A549 (cell line): ENCODE measurements at regions of chr10 and their contacts with region 1.

Region 1: DNA sequence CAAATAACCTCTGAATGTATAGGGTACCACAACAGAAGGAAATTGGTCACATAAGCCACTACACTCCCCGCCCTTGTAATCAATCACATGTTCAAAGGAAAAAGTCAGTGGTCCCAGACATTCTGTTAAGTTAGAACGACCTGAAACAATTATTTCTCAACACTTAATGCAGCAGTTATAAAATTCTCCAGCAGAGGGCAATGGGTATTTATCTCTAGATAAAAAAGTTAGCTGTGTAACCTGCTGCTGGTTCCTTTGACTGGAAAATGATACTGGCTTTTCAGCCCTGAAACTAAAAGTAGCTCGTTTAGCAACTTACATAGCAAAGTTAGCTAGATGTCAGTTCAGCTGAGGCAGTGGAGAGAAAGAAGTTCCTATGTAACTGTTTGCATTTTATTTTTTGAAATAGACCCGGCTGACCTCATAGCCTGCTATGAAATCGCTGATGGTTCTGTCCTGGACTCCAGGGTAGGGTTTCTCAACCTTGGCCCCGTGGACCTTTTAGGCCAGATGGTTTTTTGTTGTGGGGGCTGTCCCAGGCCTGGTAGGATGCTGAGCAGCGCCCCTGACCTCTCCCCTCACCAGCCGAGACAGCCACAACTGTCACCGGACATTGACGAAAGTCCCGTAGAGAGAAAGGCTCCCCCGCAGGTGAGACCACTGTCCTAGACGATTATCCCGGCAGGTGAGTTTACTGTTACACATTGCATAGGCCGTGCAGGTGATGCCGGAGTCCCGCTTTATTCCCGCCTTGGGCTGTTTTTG is 40.2 kb upstream of the PROSER2 start:
- DNase-seq: peak; percentile 63 to 72
- ATAC-seq: peak; percentile 70 to 85; a peak in 5 of 6 replicates
- H3K4me3 ChIP-seq: no peak overlapping the region
- H3K27ac ChIP-seq: no peak overlapping the region
- H3K4me1 ChIP-seq: no peaks in the 10 kb centered on the region
- CTCF ChIP-seq: peak; percentile 85
- EP300 ChIP-seq: no peak
- POLR2A ChIP-seq: no peak
- RAD21 ChIP-seq: peak; percentile 77 to 79

Region 2: DNA sequence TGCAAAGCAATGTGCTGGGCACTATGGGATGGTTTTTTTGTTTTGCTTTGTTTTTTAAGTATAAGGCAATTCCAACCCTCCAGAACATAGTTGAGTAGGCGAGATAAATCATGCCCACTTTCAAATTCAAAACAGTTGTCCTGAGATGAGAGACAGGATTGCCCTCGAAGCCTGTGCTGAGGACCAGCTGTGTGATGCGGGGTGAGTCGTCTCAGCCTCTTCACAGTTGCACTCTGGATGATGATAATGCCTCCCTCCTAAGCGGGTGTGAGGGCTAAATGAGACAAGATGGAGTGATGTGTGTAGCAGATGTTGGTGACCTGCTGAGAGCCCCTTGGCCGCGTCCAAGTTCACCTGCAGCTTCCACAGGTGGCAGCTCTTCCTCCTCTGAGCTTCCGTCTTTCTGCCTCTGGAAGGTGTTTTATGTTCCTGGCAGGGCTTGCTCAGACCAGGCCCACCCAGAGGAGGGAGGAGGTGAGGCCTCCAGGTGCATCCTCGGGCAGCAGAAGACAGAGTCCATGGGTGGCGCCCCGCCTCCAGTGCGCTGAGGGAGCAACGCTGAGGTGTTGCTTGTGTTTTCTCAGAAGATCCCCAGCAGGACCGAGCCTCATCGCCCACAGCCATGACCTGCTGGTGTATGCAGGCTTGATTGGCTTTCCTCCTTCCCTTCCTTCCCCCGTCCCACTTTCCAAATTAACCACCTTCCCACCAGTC is 10.2 kb before region 1 on chr10:
- CTCF ChIA-PET with region 1: interaction called, 29 read pairs
- POLR2A ChIA-PET with region 1: no interaction called
- DNase-seq: no peak
- ATAC-seq: no peak
- H3K4me3 ChIP-seq: no peak overlapping the region
- H3K27ac ChIP-seq: no peak overlapping the region
- H3K4me1 ChIP-seq: peaks cover 8% of the 10 kb centered on the region; the same call in 1 of the 3 replicates
- CTCF ChIP-seq: no peak
- EP300 ChIP-seq: no peak
- POLR2A ChIP-seq: no peak
- RAD21 ChIP-seq: no peak

Region 3: DNA sequence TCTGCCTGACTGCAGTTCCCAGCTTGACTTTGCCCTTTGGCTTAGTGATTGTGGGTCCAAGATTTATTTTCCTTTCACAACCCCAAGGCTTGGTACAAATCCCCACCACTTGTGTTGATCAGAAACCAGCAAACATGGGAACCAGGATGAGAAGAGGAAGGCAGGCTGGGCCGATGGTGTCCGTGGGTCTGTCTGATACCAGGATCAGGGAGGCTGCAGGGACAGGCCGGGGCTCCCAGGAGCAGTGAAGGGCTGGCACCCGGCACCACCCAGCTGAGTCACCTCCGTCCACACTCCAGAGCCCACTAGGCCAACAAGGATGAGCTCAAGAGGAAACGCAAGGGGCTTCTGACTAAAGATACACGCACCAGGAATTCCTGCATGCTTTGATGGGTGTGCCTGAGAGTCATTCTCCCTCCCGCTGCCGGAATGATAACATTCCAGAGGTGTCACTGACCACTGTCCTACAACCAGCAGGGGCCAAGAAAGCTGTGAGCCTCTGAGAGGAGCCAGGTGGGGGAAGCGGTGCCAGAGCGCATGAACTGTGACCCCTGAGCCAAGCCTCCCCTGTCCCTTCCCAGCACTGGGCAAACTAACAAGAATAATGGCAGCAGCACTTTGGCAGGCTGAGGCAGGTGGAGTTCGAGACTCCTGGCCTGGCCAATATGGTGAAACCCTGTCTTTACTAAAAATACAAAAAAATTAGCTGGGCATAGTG is 10.9 kb after region 1 on chr10:
- CTCF ChIA-PET with region 1: interaction called, 79 read pairs
- POLR2A ChIA-PET with region 1: no interaction called
- DNase-seq: peak; percentile 94 to 95
- ATAC-seq: peak; percentile 96
- H3K4me3 ChIP-seq: 0 out of 3 replicates have a peak overlapping the region, but pooled peaks have one; percentile 9
- H3K27ac ChIP-seq: peak overlapping the region; percentile 80 to 86
- H3K4me1 ChIP-seq: peaks cover 30% of the 10 kb centered on the region
- CTCF ChIP-seq: no peak
- EP300 ChIP-seq: peak in 1 of 2 experiments; percentile 53; a peak in 1 of 5 replicates
- POLR2A ChIP-seq: no peak
- RAD21 ChIP-seq: no peak

Region 4: GRCh38 chr10:11798845-11799735 is 16.1 kb after region 1 on chr10:
- CTCF ChIA-PET with region 1: interaction called, 79 read pairs
- POLR2A ChIA-PET with region 1: no interaction called
- DNase-seq: no peak
- ATAC-seq: no peak
- H3K4me3 ChIP-seq: no peak overlapping the region
- H3K27ac ChIP-seq: no peak overlapping the region
- H3K4me1 ChIP-seq: peaks cover 22% of the 10 kb centered on the region
- CTCF ChIP-seq: no peak
- EP300 ChIP-seq: no peak
- POLR2A ChIP-seq: no peak
- RAD21 ChIP-seq: no peak

Region 5: GRCh38 chr10:11810313-11810766 is 27.4 kb after region 1 on chr10:
- CTCF ChIA-PET with region 1: interaction called, 14 read pairs
- POLR2A ChIA-PET with region 1: no interaction called
- DNase-seq: peak in 1 of 2 experiments; percentile 56
- ATAC-seq: peak; percentile 35 to 77; a peak in 3 of 6 replicates
- H3K4me3 ChIP-seq: no peak overlapping the region
- H3K27ac ChIP-seq: peak overlapping the region in 1 of 2 experiments; percentile 44; a peak in 1 of 6 replicates
- H3K4me1 ChIP-seq: peaks cover 12% of the 10 kb centered on the region
- CTCF ChIP-seq: no peak
- EP300 ChIP-seq: no peak
- POLR2A ChIP-seq: no peak
- RAD21 ChIP-seq: no peak

Region 6: GRCh38 chr10:11823122-11823988 is 40.4 kb after region 1 on chr10 and contains the start of gene PROSER2:
- CTCF ChIA-PET with region 1: interaction called, 77 read pairs
- POLR2A ChIA-PET with region 1: no interaction called
- DNase-seq: peak; percentile 67 to 77
- ATAC-seq: peak; percentile 85
- H3K4me3 ChIP-seq: peak within 1 kb of the TSS; percentile 99
- H3K27ac ChIP-seq: peak within 1 kb of the TSS; percentile 92 to 93
- H3K4me1 ChIP-seq: peaks cover 34% of the 10 kb centered on the region
- CTCF ChIP-seq: no peak
- EP300 ChIP-seq: no peak
- POLR2A ChIP-seq: peak; percentile 80
- RAD21 ChIP-seq: 0 out of 5 replicates have a peak, but pooled peaks of 1 of the 2 experiments have one; percentile 11
- polyA plus RNA-seq, gene PROSER2: 8.9 and 10.1 TPM in 2 replicates